Posterior cingulate gyrus (tissue), 11 donors: ENCODE measurements at regions of chr11 and their contacts with region 1.

Region 1: DNA sequence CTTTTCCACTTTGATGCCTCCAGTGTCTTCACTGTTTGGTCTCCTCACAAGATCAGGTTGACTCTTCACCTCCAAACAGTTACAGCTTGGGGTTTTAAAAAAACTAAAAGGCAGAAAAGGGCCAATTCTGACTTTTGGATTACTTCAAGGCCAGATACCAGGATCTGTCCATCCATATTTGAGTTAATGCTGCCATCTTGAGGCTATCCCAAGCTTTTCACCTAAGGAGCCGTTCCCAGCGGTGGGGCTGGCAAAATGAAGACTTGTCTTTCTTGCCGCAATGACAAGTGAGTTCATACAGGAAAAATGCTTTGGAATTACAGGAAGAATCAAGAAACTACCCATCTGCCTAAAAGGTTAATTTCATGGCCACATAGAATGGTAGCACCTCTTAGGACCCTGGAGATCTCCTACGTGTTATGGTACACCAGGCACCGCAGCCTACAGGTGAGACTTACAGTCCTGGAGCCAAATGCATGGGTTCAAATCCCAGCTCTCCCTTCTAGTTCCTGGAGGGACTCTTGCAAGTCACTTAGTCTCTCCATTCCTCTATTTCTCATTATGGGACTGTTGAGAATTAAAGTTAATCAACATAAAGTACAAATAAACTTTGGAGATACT is 6.0 kb upstream of the OR5B21 start:
- DNase-seq: peak in 6 of 10 donors; percentile 40 to 92 (median 44)

Region 2: GRCh38 chr11:57345555-57346211 is 1168.2 kb before region 1 on chr11:
- intact Hi-C with region 1: loop called (anchors 10 kb)
- DNase-seq: peak; percentile 34 to 93 (median 72)

Region 3: DNA sequence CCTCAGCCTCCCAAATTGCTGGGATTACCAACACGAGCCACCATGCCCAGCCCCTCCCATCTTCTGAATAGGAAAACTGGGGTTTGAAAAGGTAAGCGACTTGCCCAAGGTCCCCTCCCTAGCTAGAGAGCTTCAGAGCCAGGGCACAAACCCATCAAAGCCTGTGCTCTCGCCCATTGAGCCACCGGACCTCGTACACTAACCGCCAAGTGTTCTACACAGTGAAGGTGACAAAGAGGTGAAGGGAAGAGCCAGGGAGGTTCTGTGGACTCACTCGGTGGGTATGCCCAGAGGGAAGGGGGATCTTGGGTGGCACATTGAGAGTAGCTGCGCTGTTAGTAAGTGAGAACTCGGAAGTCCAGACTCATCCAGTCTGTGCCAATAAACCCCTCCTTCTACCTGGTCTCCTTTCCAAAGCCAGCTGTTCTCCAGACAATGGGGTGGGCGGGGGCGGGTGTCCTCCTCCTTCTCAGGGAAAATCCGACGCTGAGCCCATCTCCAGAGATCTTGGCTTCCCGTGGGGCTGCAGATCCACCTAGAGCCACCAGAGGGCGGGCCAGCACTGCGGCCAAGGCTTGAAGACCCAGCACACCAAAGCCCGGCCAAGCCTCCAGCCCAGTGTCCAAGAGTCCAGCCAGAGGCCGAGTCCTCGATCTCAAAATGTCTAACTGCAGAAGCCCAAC is 1056.8 kb before region 1 on chr11:
- intact Hi-C with region 1: loop called (anchors 10 kb)
- DNase-seq: peak; percentile 78 to 98 (median 90)

Region 4: DNA sequence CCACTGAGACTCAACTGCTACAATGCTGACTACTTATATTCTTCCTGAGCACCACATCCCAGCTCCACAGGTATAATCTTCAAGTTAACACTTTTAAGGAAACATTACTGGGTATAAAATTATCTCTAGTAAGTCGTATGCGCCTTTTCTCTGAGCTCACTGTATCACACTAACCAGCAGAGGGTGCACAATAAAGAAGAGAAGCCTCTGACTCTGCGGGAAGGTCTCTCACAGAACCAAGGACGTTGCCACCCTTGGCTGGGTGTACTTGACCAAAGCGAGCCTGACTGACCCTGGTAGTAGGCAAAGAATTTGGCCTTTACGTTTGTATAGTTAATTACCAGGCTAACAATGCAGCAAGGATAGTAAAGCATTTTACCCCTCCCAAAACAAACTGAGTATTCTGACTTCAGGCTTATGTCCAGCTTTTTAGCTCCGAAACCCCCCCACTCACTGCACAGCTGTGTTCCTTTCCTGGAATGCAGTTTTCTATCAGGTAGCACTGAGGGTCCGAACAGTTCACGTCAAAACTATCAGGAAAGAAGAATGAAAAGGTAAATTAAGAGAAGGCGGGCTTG is 762.1 kb before region 1 on chr11 and contains the start of gene BTBD18:
- intact Hi-C with region 1: loop called (anchors 10 kb)
- DNase-seq: no peak

Region 5: GRCh38 chr11:58757439-58757838 is 243.6 kb after region 1 on chr11:
- intact Hi-C with region 1: no loop called
- DNase-seq: no peak